Spleen (tissue), 13 donors: ENCODE measurements at regions of chr15 and their contacts with region 1.

Region 1: GRCh38 chr15:38817427-38818156 is 253.0 kb upstream of the RASGRP1 start:
- DNase-seq: peak; percentile 93
- H3K4me3 ChIP-seq: peak overlapping the region in 1 of 8 donors; percentile 23
- H3K27ac ChIP-seq: no peak overlapping the region
- H3K4me1 ChIP-seq: peaks cover 0 to 11% (median 7%) of the 10 kb centered on the region in 6 donors
- H3K27me3 ChIP-seq: no peaks in the 10 kb centered on the region
- CTCF ChIP-seq: peak; percentile 82 to 97 (median 92)
- POLR2A ChIP-seq: no peak

Region 2: DNA sequence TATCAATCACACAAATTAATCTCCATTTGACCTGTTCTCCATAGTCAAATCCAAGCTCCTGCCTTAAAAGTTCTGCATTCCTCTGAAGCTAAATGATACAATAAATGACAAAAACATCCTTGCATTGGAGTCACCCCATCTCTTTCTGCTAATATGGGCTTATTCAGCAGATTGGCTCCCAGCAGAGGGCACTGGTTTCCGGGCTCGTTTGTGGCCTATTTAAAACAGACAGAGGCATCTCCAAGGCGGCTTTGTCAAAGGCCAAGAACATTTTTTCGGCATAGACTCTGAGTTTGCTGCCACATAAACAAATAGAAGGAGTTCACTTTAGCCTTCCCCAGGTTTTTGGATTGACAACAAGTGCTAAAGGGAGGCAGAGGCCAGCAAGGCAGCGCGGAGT is 48.6 kb before region 1 on chr15:
- intact Hi-C with region 1: no loop called
- DNase-seq: no peak
- H3K4me3 ChIP-seq: no peak overlapping the region
- H3K27ac ChIP-seq: no peak overlapping the region
- H3K4me1 ChIP-seq: no peaks in the 10 kb centered on the region
- H3K27me3 ChIP-seq: no peaks in the 10 kb centered on the region
- CTCF ChIP-seq: no peak
- POLR2A ChIP-seq: no peak

Region 3: DNA sequence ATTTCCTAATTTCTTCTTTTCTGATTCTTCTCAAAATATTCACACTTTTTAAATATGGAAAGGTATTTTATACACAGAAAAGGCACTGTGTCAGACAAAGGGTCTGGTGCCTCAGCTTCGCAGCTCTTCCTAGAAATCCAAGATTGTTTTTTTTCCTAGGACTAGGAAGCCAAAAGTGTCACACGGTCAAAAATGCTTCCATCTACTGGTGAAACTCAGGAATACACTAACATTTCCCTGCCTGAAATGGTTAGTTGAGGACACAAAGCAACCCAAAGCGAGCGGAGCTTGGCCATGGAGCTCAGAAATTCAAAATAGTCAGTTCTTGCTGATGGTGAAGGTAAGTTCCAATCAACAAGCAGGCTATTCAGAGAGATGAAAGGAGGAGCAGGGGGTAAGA is 173.5 kb after region 1 on chr15:
- intact Hi-C with region 1: loop called (anchors 5 kb)
- DNase-seq: no peak
- H3K4me3 ChIP-seq: no peak overlapping the region
- H3K27ac ChIP-seq: peak overlapping the region in 2 of 8 donors; percentile 27 to 32
- H3K4me1 ChIP-seq: no peaks in the 10 kb centered on the region
- H3K27me3 ChIP-seq: no peaks in the 10 kb centered on the region
- CTCF ChIP-seq: peak in 8 of 11 experiments; percentile 16 to 51 (median 40)
- POLR2A ChIP-seq: no peak